Tibial artery (tissue), 4 donors: ENCODE measurements at regions of chr3 and their contacts with region 1.

Region 1: GRCh38 chr3:185878920-185879319 is 54.1 kb upstream of the IGF2BP2 start:
- DNase-seq: no peak
- H3K4me3 ChIP-seq: no peak overlapping the region
- H3K27ac ChIP-seq: no peak overlapping the region
- H3K4me1 ChIP-seq: no peaks in the 10 kb centered on the region
- H3K27me3 ChIP-seq: peaks cover 0 to 7% of the 10 kb centered on the region in 2 donors
- CTCF ChIP-seq: no peak

Region 2: GRCh38 chr3:184850201-184850600 is 1028.7 kb before region 1 on chr3:
- intact Hi-C with region 1: loop called (anchors 5 kb)
- DNase-seq: no peak
- H3K4me3 ChIP-seq: no peak overlapping the region
- H3K27ac ChIP-seq: no peak overlapping the region
- H3K4me1 ChIP-seq: no peaks in the 10 kb centered on the region
- H3K27me3 ChIP-seq: no peaks in the 10 kb centered on the region
- CTCF ChIP-seq: no peak

Region 3: DNA sequence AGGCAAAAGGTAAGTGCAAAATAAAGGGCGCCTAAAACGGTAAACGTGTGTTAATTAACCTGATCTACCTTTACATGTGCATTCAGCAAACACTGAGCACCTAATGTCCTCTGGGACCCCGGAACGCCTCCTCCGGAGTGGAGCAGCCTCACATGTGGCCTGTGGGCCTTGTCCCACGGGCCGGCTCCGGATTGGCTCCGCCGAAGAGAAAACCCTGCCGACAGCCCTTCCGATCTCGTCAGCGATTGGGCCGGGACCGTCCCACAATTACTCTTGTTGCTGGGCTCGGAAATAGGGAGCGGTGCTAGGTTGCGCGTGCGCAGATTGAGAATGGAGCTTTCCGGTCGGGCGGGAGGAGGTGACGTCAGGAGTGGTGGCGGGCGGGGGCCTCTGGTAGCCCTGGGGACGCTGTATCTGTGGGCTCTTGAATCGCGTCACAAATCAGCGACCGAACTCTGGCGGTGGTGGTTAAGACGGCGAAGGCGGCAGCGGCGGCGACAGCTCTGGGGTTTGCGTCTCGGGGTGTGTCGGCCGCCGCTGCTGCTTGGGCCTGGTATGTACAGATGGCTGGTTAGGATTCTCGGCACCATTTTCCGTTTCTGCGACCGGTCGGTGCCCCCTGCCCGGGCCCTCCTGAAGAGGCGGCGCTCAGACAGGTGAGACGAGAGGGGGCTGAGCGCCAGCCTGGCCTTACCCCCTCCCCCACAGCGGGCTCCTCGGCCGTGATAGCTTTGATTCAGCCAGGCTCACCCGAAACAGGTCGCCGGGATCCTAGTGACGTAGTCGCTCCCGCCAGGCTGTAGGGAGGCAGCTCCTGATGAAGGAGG is 292.8 kb before region 1 on chr3 and contains the start of gene SENP2:
- intact Hi-C with region 1: no loop called
- DNase-seq: peak; percentile 99 to 100
- H3K4me3 ChIP-seq: peak within 1 kb of the TSS; percentile 69 to 90
- H3K27ac ChIP-seq: peak within 1 kb of the TSS; percentile 90 to 97
- H3K4me1 ChIP-seq: peaks cover 0 to 28% (median 16%) of the 10 kb centered on the region in 4 donors
- H3K27me3 ChIP-seq: no peaks in the 10 kb centered on the region
- CTCF ChIP-seq: peak in 1 of 2 experiments; percentile 12